Heart right ventricle (tissue), 16 donors: ENCODE measurements at regions of chr11 and their contacts with region 1.

Region 1: GRCh38 chr11:59802639-59803176 is 7.9 kb downstream of the MRPL16 start:
- DNase-seq: peak in 1 of 2 donors; percentile 62
- ATAC-seq: peak; percentile 72 to 87 (median 80)
- H3K4me3 ChIP-seq: peak overlapping the region in 1 of 10 donors; percentile 11
- H3K27ac ChIP-seq: peak overlapping the region in 9 of 10 donors; percentile 5 to 83 (median 50)
- H3K4me1 ChIP-seq: peaks cover 0 to 22% (median 12%) of the 10 kb centered on the region in 9 donors
- H3K27me3 ChIP-seq: no peaks in the 10 kb centered on the region
- CTCF ChIP-seq: peak; percentile 45 to 83 (median 72)

Region 2: DNA sequence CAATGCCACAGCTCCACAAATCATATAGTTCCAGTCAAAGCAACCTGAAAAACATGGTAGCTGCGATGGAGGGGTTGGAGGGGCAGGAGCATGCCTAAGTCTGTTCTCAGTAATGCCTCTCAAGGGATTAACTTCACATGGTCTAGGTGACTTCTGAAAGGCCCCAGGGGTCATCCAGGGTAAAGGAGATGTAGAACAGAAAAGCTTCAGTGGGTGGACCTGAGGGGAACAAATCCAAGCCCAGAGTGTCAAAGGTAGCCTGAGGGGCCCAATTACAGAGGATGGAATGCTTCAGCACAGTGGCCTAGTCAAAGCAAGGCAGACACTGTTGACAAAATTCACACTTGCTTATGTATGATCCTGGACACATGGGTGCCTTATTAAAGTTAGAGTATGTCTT is 268.0 kb before region 1 on chr11:
- intact Hi-C with region 1: loop called in 5 of 10 experiments (anchors 5 to 10 kb)
- DNase-seq: no peak
- ATAC-seq: no peak
- H3K4me3 ChIP-seq: no peak overlapping the region
- H3K27ac ChIP-seq: no peak overlapping the region
- H3K4me1 ChIP-seq: peaks cover 0 to 13% (median 7%) of the 10 kb centered on the region in 9 donors
- H3K27me3 ChIP-seq: no peaks in the 10 kb centered on the region
- CTCF ChIP-seq: no peak

Region 3: GRCh38 chr11:59545179-59546020 is 257.3 kb before region 1 on chr11:
- intact Hi-C with region 1: loop called in 2 of 10 experiments (anchors 10 kb)
- DNase-seq: no peak
- ATAC-seq: no peak
- H3K4me3 ChIP-seq: no peak overlapping the region
- H3K27ac ChIP-seq: peak overlapping the region in 1 of 10 donors; percentile 8
- H3K4me1 ChIP-seq: peaks cover 0 to 23% (median 8%) of the 10 kb centered on the region in 9 donors
- H3K27me3 ChIP-seq: no peaks in the 10 kb centered on the region
- CTCF ChIP-seq: no peak

Region 4: DNA sequence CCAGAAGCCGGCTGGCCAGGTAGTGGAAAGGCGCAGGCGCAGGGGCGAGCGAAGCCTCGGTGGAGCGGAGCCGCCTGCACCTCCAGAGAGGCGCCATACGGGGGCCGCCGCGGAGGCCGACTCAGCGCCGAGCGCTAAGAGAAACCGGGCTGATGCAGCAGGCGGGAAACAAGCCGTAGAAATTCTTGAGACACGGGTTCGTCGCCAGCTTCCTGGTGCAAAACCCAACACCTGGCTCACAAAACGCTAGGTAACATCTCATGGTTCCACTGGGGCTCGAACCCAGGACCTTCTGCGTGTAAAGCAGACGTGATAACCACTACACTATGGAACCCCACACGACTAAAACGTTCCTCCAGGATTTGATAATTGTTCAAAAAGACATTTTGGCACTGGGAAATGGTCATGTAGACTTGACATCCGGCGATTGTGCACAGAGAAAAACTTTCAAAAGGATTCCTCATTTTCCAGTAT is 252.3 kb before region 1 on chr11:
- intact Hi-C with region 1: loop called in 2 of 10 experiments (anchors 10 kb)
- DNase-seq: peak; percentile 67 to 71
- ATAC-seq: peak; percentile 79 to 93 (median 88)
- H3K4me3 ChIP-seq: peak overlapping the region; percentile 2 to 61 (median 50)
- H3K27ac ChIP-seq: peak overlapping the region; percentile 37 to 85 (median 78)
- H3K4me1 ChIP-seq: peaks cover 0 to 40% (median 9%) of the 10 kb centered on the region in 9 donors
- H3K27me3 ChIP-seq: no peaks in the 10 kb centered on the region
- CTCF ChIP-seq: peak in 7 of 9 donors; percentile 32 to 63 (median 50)

Region 5: GRCh38 chr11:59689015-59689414 is 113.7 kb before region 1 on chr11:
- intact Hi-C with region 1: no loop called
- DNase-seq: no peak
- ATAC-seq: no peak
- H3K4me3 ChIP-seq: no peak overlapping the region
- H3K27ac ChIP-seq: no peak overlapping the region
- H3K4me1 ChIP-seq: no peaks in the 10 kb centered on the region
- H3K27me3 ChIP-seq: peaks cover 0 to 11% (median 3%) of the 10 kb centered on the region in 7 donors
- CTCF ChIP-seq: no peak

Region 6: DNA sequence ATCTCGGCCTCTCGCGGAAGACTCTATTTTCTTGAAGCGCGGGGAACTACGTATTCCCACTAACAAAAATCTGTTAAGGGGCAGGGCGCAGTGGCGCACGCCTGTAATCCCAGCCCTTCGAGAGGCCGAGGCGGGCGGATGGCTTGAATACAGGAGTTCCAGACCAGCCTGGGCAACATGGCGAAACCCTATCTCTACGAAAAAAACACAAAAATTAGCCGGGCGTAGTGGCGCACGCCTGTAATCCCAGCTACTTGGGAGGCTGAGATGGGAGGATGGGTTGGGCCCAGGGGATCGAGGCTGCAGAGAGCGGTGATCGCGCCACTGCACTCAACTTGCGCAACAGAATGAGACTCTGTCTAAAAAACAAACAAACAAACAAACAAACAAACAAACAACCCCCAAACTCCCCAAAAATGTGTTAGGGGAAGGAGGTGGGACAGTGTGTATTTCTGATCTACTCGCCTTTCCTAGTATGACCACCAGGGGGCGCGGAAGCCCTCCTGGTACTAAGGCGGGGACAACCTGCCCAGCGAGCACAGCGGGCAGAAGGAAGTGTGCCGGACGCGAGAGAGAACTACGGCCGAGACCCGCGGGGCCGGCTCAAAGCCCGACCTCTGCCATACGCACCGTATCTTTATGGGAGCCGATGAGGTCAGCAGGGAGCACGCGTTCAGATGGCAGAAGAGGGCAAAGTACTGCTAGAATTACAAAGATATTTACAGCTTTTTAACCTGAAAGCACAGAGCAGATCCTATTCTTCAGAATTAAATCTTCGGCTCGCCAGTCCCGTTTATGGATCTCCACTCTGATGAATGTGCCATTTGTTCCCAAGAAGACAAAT is 48.8 kb before region 1 on chr11:
- intact Hi-C with region 1: loop called (anchors 1 to 5 kb)
- DNase-seq: peak; percentile 84 to 87
- ATAC-seq: peak; percentile 70 to 93 (median 85)
- H3K4me3 ChIP-seq: peak overlapping the region; percentile 81 to 96 (median 88)
- H3K27ac ChIP-seq: peak overlapping the region in 9 of 10 donors; percentile 93 to 98 (median 96)
- H3K4me1 ChIP-seq: peaks cover 0 to 26% (median 15%) of the 10 kb centered on the region in 9 donors
- H3K27me3 ChIP-seq: no peaks in the 10 kb centered on the region
- CTCF ChIP-seq: peak; percentile 92 to 98 (median 94)

Region 7: GRCh38 chr11:60077981-60078380 is 275.3 kb after region 1 on chr11:
- intact Hi-C with region 1: no loop called
- DNase-seq: no peak
- ATAC-seq: no peak
- H3K4me3 ChIP-seq: no peak overlapping the region
- H3K27ac ChIP-seq: no peak overlapping the region
- H3K4me1 ChIP-seq: no peaks in the 10 kb centered on the region
- H3K27me3 ChIP-seq: no peaks in the 10 kb centered on the region
- CTCF ChIP-seq: no peak